ENCODE measurements at regions of chr10 and their contacts with region 1.

Region 1: GRCh38 chr10:100518761-100519241 is 860 bp downstream of the SEC31B start:
- DNase-seq: peak; percentile 51 to 56 (median 53)
- H3K4me3 ChIP-seq: peak overlapping the region in 3 of 7 experiments; percentile 46 to 62 (median 62)
- H3K27ac ChIP-seq: no peak overlapping the region
- H3K4me1 ChIP-seq: peaks cover 0 to 10% (median 3%) of the 10 kb centered on the region in 4 experiments
- H3K27me3 ChIP-seq: peaks cover 0 to 20% (median 13%) of the 10 kb centered on the region in 5 experiments

Region 2: GRCh38 chr10:100174699-100175677 is 343.8 kb before region 1 on chr10:
- CTCF ChIA-PET with region 1: no interaction called
- POLR2A ChIA-PET with region 1: no interaction called
- DNase-seq: no peak
- H3K4me3 ChIP-seq: no peak overlapping the region
- H3K27ac ChIP-seq: no peak overlapping the region
- H3K4me1 ChIP-seq: peaks cover 4 to 19% (median 10%) of the 10 kb centered on the region in 4 experiments
- H3K27me3 ChIP-seq: no peaks in the 10 kb centered on the region

Region 3: DNA sequence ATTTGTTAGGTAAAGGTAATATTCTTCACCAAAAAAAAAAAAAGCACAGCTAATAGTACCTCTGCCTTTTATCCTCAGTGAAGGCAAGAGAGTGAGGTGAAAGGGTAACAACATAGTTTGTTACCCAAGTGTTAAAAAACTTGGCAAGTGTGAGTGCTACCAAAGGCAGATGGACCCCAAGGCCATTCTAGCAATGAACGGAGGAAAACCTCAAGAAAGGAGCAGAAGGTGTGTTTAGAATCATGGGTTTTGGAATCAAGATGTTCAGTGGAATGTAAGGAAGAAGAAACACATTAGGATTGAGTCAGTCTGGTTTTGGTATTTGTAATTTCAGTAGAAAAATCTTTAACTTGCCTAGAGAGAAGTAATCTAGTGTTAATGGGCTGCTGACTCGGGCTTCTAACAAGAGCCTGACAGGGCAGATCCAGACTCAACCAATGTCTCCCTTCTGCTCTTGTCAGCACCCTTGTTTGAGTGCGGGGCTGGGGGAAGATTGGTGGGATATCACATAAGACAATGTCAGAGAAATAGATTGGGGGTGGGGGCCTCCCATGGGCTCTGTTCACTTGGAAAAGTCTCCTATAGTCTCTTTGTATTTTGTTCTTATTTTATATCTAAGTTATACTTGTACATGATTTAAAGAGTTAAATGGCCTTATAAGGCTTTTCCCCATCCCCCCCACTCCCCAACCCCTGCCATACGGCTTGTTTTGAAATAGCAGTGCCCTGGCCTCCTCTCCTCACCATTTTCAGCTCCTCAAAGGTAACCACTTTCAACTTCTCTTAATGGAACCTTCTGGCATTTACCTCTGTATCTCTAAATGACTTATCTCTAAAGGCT is 127.4 kb before region 1 on chr10:
- CTCF ChIA-PET with region 1: no interaction called
- POLR2A ChIA-PET with region 1: no interaction called
- DNase-seq: no peak
- H3K4me3 ChIP-seq: no peak overlapping the region
- H3K27ac ChIP-seq: no peak overlapping the region
- H3K4me1 ChIP-seq: no peaks in the 10 kb centered on the region
- H3K27me3 ChIP-seq: no peaks in the 10 kb centered on the region

Region 4: GRCh38 chr10:100433253-100434240 is 85.3 kb before region 1 on chr10:
- CTCF ChIA-PET with region 1: interaction called, 69 read pairs
- POLR2A ChIA-PET with region 1: no interaction called
- DNase-seq: peak; percentile 91 to 97 (median 92)
- H3K4me3 ChIP-seq: no peak overlapping the region
- H3K27ac ChIP-seq: no peak overlapping the region
- H3K4me1 ChIP-seq: no peaks in the 10 kb centered on the region
- H3K27me3 ChIP-seq: no peaks in the 10 kb centered on the region

Region 5: DNA sequence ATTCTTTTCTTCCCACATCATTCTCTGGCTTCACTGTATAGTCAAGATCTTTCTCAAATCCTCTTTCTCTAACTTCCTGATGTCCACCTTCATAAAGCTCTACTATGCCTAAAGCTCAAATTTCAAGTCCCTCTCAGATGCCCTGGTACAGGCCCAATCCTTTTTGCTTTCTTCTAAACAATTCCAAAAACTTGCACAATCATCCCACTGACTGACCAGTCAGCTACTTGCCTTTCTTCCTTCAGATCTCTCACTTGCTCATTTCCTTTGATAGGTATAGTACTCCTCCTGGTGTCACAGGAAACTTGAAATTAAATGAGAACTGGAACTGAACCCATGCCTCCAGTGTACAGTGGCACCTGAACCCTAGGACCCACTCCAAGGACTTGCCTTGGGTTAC is 17.4 kb before region 1 on chr10:
- CTCF ChIA-PET with region 1: interaction called, 26 read pairs
- POLR2A ChIA-PET with region 1: no interaction called
- DNase-seq: no peak
- H3K4me3 ChIP-seq: no peak overlapping the region
- H3K27ac ChIP-seq: no peak overlapping the region
- H3K4me1 ChIP-seq: no peaks in the 10 kb centered on the region
- H3K27me3 ChIP-seq: no peaks in the 10 kb centered on the region

Region 6: DNA sequence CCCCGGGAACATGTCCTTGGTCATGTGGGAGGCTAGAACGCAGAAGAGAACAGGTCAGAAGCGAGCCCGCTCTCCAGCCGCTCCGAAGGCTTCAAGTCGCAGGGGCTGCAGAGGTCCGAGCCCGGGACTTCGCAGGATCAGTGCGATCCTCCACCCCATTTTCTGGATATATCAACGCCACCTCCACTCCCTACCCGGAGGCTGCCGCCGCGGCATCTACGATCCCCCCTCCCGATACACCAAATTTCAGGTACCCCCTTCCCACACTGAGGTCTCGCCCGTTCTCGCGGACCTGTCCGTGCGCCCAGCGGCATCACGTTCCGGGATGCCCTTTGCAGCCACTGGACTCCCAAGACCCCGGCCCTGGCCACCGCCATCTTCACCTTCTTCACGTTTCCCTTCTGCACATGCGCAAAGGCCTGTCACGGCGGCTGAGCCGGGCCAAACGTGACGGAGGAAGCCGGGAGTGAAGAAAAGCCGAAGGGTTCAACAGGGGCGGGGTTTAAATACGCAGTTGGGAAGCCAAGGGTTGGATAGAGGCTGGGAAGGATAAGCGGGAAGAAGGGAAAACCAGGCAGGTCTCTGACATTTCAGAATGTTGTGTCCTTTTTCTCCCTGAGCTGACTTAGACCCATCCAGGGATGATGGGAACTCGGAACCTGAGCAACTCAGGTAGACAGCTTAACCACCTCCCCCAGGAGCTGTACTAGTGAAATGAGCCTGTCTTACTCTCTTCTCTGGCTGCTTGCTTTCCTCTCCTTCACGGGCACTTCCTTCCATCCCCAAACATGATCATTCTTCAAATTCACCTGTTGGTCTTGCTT is 10.9 kb after region 1 on chr10 and contains the start of gene NDUFB8:
- CTCF ChIA-PET with region 1: interaction called, 38 read pairs
- POLR2A ChIA-PET with region 1: no interaction called
- DNase-seq: peak; percentile 73 to 83 (median 78)
- H3K4me3 ChIP-seq: peak within 1 kb of the TSS; percentile 78 to 100 (median 97)
- H3K27ac ChIP-seq: peak within 1 kb of the TSS; percentile 70 to 87
- H3K4me1 ChIP-seq: peaks cover 9 to 23% (median 17%) of the 10 kb centered on the region in 4 experiments
- H3K27me3 ChIP-seq: no peaks in the 10 kb centered on the region

Region 7: DNA sequence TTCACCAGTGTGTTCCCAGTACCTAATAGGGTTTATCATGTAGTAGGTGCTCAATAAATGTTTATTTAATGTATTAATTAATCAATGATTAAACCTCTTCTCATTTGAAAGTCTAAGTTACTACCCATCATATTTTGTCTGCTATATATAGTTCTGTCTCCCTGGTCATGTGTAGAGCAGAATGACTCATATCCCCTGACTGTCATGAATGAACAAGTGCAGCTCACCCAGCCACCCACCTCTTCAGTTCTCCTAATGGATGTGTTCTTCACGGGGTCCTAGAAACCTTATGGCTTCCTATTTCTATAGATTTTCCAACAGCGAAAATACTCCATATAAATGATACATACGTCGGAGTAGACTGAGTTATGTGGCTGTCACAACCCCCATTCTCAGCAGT is 81.4 kb after region 1 on chr10:
- CTCF ChIA-PET with region 1: no interaction called
- POLR2A ChIA-PET with region 1: no interaction called
- DNase-seq: no peak
- H3K4me3 ChIP-seq: no peak overlapping the region
- H3K27ac ChIP-seq: no peak overlapping the region
- H3K4me1 ChIP-seq: no peaks in the 10 kb centered on the region
- H3K27me3 ChIP-seq: peaks cover 6 to 51% (median 13%) of the 10 kb centered on the region in 5 experiments